ENCODE measurements at regions of chr2 and their contacts with region 1.

Region 1: DNA sequence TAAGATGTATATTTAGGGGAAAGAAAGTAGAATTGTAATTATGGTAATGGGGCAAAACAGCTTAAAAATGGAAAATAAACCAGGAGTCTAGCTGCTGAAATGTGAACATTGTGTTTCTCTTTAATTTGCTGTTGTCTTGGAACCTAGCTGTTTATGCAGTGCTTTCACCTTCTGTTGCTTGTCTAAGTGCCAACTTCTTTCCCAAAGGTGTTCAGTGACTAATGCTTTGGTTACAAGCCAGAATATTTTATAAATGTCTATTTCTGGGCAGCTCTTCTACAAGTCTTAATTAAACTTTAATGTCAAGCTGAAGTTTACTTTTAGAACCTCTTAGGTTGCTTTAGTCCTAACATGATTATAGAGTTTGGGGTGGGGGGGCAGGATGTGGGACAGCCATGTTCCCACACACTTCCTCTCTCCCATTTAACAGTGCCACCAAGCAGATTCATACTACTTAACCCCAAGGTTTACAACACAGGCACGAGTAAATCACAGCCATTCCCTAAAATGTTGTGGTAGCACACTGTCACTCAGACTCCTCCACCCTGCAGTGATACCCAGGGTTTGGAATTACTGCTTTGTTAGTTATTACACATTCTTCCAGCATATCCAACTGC is 60.6 kb downstream of the ITGA4 start:
- DNase-seq: no peak
- H3K4me3 Mint-ChIP-seq: no peak overlapping the region
- H3K27ac Mint-ChIP-seq: no peak overlapping the region
- H3K4me1 Mint-ChIP-seq: peaks cover 32% of the 10 kb centered on the region
- H3K27me3 Mint-ChIP-seq: no peaks in the 10 kb centered on the region

Region 2: GRCh38 chr2:181483876-181484275 is 33.9 kb before region 1 on chr2:
- intact Hi-C with region 1: loop called (anchors 5 kb)
- DNase-seq: no peak
- H3K4me3 Mint-ChIP-seq: no peak overlapping the region
- H3K27ac Mint-ChIP-seq: peak overlapping the region; percentile 2
- H3K4me1 Mint-ChIP-seq: peaks cover 14% of the 10 kb centered on the region
- H3K27me3 Mint-ChIP-seq: no peaks in the 10 kb centered on the region

Region 3: GRCh38 chr2:181528441-181528840 is 10.6 kb after region 1 on chr2:
- intact Hi-C with region 1: loop called (anchors 2 kb)
- DNase-seq: no peak
- H3K4me3 Mint-ChIP-seq: no peak overlapping the region
- H3K27ac Mint-ChIP-seq: no peak overlapping the region
- H3K4me1 Mint-ChIP-seq: no peaks in the 10 kb centered on the region
- H3K27me3 Mint-ChIP-seq: no peaks in the 10 kb centered on the region

Measured in activated T-helper 1 cell treated with anti-CD3 and anti-CD28 coated beads, Interleukin-12 subunit alpha, Interleukin-12 subunit beta, Interleukin-2, Interleukin-4 antibody, amounts not matched to agents 30 ng/mL and 10 ng/mL and 1 ng/mL, durations not matched to agents 14 hours and 24 hours and 36 hours (primary cell).